PC-3 (cell line): ENCODE measurements at regions of chr10 and their contacts with region 1.

Region 1: DNA sequence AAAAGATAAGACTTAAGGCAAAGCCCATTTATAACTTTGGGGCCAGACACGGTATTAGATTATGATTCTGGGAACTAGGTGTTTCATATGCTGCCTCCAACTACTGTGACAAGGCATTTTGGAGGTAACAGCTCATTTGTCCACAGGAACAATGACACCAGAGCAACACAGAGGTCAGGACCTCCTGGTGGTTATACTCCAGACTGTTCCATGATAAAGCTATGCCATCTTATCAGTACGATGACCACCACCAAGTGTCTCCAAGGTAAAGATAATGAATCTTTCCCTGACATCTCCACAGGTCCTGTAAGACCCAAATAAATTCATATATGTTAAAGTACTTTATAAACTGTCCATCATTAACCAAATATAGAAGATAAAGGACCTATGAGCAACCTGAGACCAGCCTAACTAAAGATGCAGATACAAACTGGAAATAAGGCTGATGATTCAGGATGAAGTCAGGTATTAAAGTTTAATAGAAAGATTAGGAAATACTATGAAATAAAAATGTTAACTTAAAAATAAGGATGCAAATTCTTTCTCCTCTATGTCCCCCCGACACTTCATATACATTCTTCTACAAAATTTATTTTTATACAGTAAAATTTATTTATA is 26.2 kb downstream of the CUL2 start:
- DNase-seq: peak; percentile 91
- ATAC-seq: peak; percentile 87
- H3K4me3 ChIP-seq: no peak overlapping the region
- H3K27ac ChIP-seq: peak overlapping the region; percentile 20
- H3K4me1 ChIP-seq: peaks cover 33% of the 10 kb centered on the region
- H3K27me3 ChIP-seq: no peaks in the 10 kb centered on the region
- CTCF ChIP-seq: no peak

Region 2: DNA sequence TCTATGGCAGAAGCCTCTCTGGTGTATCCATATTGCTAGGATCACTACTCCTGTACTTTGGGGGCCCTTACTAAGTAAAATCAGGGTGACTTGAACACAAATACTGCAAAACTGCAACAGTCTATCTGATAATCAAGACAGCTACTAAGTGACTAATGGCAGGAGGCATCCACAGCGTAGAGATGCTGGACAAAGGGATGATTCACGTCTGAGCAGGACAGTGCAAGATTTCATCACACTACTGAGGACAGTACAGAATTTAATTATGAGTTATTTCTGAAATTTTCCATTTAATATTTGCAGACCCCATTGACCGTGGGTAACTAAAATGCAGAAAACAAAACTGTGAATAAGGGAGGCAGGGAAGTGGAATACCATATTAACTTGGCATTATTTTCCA is 15.8 kb after region 1 on chr10:
- CTCF ChIA-PET with region 1: no interaction called
- POLR2A ChIA-PET with region 1: interaction called, 3 read pairs
- intact Hi-C with region 1: loop called (anchors 2 kb)
- DNase-seq: peak; percentile 94
- ATAC-seq: peak; percentile 100
- H3K4me3 ChIP-seq: no peak overlapping the region
- H3K27ac ChIP-seq: no peak overlapping the region
- H3K4me1 ChIP-seq: peaks cover 9% of the 10 kb centered on the region
- H3K27me3 ChIP-seq: no peaks in the 10 kb centered on the region
- CTCF ChIP-seq: no peak